ENCODE measurements at regions of chr3 and their contacts with region 1.

Region 1: DNA sequence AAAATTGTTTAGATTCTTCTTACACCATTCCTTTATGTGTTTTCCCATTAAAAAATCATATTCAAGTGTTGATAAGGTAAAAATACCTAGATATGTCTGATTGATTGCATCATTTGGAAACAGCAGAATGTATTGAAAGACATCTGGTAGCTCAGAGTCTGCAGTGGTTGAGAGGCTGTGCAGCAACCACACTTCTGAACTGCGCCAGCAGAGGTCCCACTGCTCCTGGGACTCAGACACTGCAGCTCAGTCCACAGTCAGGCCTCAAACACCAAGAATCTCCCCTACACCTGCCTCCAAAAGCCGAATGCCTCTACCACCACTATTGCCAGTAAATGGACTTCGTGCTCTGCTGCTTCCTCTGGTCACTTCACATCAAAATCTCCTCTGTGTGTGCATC is 176.9 kb upstream of the LMCD1 start:
- DNase-seq: peak; percentile 50 to 65 (median 60)
- H3K4me3 ChIP-seq: no peak overlapping the region
- H3K4me3 Mint-ChIP-seq: no peak overlapping the region
- H3K27ac ChIP-seq: no peak overlapping the region
- H3K27ac Mint-ChIP-seq: peak overlapping the region in 3 of 7 donors; percentile 34 to 52 (median 43)
- H3K4me1 ChIP-seq: peaks cover 10% of the 10 kb centered on the region
- H3K4me1 Mint-ChIP-seq: peaks cover 21 to 24% (median 22%) of the 10 kb centered on the region in 4 donors
- H3K27me3 ChIP-seq: no peaks in the 10 kb centered on the region
- H3K27me3 Mint-ChIP-seq: no peaks in the 10 kb centered on the region

Region 2: DNA sequence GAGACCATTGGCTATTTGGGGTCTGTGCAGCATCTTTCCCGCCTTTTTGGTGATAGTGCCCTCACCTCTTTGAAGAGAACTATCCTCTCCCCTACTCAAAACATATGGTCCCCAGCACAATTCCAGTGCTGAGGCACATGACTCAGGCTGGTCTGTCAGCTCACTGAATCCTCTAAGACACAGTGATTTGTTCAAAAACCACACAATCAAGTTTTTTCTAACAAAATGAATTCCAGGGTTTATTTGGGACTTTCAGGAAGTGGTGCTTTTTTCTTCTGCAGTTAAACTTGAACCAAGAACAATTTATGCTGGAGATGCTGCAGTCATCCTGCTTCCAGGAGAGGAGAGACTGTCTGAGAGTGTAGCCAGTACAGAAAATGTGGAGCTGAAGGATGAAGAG is 34.4 kb after region 1 on chr3:
- CTCF ChIA-PET with region 1: interaction called, 64 read pairs
- POLR2A ChIA-PET with region 1: interaction called, 14 read pairs
- intact Hi-C with region 1: loop called (anchors 2 kb)
- DNase-seq: no peak
- H3K4me3 ChIP-seq: no peak overlapping the region
- H3K4me3 Mint-ChIP-seq: peak overlapping the region in 5 of 8 donors; percentile 50 to 71 (median 61)
- H3K27ac ChIP-seq: no peak overlapping the region
- H3K27ac Mint-ChIP-seq: peak overlapping the region in 6 of 7 donors; percentile 16 to 85 (median 64)
- H3K4me1 ChIP-seq: peaks cover 52% of the 10 kb centered on the region
- H3K4me1 Mint-ChIP-seq: peaks cover 30 to 62% (median 47%) of the 10 kb centered on the region in 4 donors
- H3K27me3 ChIP-seq: no peaks in the 10 kb centered on the region
- H3K27me3 Mint-ChIP-seq: peaks cover 0 to 2% of the 10 kb centered on the region in 2 donors

Region 3: GRCh38 chr3:8423307-8423706 is 98.6 kb after region 1 on chr3:
- CTCF ChIA-PET with region 1: interaction called, 391 read pairs
- POLR2A ChIA-PET with region 1: interaction called, 46 read pairs
- intact Hi-C with region 1: no loop called
- DNase-seq: no peak
- H3K4me3 ChIP-seq: no peak overlapping the region
- H3K4me3 Mint-ChIP-seq: no peak overlapping the region
- H3K27ac ChIP-seq: no peak overlapping the region
- H3K27ac Mint-ChIP-seq: no peak overlapping the region
- H3K4me1 ChIP-seq: no peaks in the 10 kb centered on the region
- H3K4me1 Mint-ChIP-seq: no peaks in the 10 kb centered on the region
- H3K27me3 ChIP-seq: no peaks in the 10 kb centered on the region
- H3K27me3 Mint-ChIP-seq: no peaks in the 10 kb centered on the region

Region 4: DNA sequence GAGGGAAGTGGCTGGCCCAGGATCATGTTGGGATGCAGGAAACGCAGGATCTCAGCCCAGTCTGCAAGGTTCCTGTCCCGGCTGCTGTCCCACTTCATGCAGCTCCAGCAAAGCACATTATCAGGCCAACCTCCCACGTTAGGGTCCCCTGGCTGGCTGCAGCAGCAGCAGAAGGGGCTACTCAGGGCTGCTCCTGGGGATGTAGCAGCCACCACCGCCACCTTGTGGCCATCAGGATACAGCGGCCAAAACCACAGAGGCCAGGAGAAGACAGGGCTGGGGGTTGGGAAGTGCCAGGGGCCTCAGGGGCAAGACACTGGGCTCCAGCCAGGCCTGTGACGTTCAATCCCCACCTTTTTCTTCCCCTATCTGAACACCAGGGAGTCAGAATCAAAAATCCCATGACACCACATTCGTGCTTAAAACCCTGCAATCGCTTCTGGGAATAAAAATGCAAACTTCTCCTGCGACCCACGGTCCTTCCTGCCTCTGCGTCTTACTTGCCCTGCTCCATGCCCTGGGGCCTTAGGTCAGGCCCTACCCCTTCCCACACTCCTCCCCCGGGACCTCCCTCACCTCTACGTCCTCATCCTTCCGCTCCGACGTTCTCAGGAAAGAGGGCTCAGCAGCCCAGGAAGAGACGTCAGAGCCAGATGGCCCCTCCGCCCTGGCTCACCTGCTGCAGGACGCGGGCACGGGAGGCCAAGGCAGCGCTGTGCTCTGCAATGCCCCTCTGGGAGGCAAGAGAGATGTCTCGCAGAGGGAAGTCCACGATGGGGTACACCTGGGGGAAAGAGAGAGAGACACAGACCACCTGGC is 298.3 kb after region 1 on chr3:
- CTCF ChIA-PET with region 1: no interaction called
- POLR2A ChIA-PET with region 1: no interaction called
- intact Hi-C with region 1: loop called (anchors 10 kb)
- DNase-seq: peak in 2 of 5 donors; percentile 14 to 22
- H3K4me3 ChIP-seq: no peak overlapping the region
- H3K4me3 Mint-ChIP-seq: peak overlapping the region in 5 of 8 donors; percentile 1 to 80 (median 35)
- H3K27ac ChIP-seq: no peak overlapping the region
- H3K27ac Mint-ChIP-seq: peak overlapping the region in 1 of 7 donors; percentile 52
- H3K4me1 ChIP-seq: no peaks in the 10 kb centered on the region
- H3K4me1 Mint-ChIP-seq: peaks cover 1 to 10% (median 5%) of the 10 kb centered on the region in 4 donors
- H3K27me3 ChIP-seq: no peaks in the 10 kb centered on the region
- H3K27me3 Mint-ChIP-seq: peaks cover 0 to 2% of the 10 kb centered on the region in 2 donors

Measured in CD4-positive, alpha-beta memory T cell (primary cell).